Posterior cingulate gyrus (tissue), 11 donors: ENCODE measurements at regions of chr6 and their contacts with region 1.

Region 1: DNA sequence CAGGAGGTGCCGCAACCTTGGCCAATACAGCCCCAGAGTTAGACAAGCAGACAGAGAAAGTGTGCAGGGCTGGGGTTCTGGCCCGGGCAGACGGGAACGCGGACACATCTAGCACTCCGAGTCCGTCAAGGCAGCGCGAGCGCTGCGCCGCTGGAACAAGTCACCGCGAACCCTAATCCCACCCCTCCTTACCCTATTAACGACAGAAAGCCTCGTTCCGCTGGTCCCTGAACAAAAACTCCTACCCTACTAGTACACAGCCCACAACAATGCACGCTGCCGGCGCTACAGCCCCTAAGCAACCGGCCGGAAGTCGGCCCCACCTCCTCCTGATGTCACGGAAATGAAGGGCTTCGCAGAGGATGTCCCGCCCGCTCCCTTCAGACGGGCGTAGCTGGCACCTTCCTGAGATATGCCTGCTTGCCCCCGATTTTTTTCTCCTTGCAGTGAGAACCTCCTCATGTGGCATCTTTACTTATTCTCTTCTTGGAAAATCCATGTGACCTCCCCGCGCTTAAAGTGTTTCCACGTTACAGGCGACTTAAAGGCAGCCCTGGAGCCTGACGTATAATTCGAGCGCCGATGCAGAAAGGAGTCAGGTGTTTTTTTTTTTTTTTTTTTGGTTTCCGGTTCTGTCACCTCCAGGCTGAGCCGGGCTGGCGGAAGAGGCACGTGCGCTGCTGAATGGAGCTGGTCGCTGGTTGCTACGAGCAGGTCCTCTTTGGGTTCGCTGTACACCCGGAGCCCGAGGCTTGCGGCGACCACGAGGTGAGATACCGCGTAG is at the starts of genes C6orf52 and PAK1IP1:
- DNase-seq: peak; percentile 89 to 99 (median 94)

Region 2: DNA sequence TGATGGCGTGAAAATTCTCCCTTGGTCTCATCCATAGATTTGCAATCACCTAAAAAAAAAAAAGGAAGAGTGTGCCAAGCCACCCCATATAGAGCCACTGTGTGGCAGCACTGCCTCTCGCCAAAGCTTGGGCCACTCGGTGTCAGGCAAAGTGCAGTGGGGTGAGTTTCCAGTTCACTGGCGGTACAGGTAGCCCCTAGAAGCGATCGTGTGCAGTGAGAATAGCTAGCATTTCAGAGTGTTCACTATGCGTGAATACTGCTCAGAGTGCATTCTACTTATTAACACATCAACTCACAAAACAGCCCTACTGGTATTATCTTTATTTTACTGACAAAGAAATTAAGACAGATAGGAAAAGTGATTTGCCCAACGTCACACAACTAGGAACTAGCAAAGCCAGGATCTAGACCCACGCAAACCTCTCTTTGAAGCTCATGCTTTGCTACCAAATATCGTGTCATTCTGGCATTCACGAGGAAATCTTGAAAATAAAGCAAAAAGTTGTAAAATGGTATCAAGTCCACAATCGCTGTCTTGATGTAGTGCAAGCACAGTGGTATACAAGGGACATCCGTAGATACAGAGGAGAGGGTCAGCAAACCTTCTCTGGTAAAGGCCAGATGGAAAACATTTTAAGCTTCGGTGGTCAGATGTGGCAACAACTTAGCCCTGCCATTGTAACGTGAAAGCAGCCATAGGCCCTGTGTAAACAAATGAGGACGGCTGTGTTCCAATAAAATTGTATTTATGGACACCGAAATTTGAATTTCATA is 183.7 kb before region 1 on chr6:
- intact Hi-C with region 1: loop called (anchors 2 kb)
- DNase-seq: peak in 8 of 10 donors; percentile 45 to 90 (median 56)

Region 3: DNA sequence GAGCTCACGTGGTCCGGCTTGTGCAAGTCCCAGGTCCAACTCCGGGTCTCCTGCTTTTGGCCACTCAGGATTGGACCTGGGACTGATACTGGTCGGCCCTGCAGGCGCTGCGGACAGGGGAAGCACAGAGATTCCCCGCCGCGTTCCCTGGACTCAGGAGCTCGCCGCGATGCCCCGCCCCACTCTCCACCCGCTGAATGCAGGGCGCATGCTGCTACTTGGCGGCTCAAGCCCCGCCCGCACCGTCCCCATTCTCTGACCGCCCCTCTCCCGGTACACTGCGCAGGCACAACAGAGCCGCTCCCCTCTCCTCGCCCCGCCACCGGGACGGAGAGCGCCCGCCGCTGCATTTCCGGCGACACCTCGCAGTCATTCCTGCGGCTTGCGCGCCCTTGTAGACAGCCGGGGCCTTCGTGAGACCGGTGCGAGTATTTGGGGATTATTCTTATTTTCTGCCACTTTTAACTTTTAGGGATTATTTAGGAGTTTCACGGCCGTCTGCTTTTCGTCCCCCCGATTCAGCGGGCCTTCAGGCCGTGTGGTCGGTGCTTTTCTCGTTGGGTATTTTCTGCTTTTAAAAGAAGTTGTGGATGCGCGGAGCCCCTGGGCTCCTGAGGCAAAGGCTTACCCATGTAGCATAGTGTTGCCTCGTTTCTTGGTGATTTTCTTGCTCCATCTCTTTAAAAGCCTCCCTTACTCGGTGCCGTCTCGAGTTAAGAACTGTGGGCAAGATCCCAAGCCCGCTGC is 28.5 kb after region 1 on chr6 and contains the start of gene TMEM14C:
- intact Hi-C with region 1: loop called (anchors 1 kb)
- DNase-seq: peak; percentile 94 to 100 (median 98)

Region 4: DNA sequence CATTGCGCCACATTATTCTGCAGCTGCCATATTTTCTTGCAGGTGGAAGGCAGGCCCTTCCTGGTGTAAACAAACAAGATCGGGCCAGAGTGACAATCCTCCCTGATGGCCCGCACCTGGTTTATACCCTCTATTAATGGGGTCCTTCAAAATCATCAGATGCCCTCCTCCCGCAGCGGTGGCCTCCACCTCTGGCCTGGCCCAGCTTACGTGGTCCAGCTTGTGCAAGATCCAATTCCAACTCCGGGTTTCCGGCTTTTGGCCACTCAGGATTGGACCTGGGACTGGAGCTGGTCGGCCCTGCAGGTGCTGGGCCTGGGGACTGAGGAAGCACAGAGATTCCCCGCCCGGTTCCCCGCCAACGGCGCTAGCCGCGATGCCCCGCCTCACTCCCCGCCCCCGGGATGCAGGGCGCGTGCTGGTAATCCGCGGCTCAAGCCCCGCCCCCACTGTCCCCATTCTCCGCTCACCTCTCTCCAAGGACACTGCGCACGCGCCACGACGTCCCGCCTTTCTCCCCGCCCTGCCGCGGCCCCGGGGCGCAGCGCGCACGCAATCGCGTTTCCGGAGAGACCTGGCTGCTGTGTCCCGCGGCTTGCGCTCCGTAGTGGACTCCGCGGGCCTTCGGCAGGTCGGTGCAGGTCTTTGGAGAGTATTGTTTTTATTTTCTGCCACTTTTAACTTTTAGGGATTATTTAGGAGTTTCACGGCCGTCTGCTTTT is 52.9 kb after region 1 on chr6 and contains the start of gene TMEM14B:
- intact Hi-C with region 1: loop called (anchors 1 kb)
- DNase-seq: peak; percentile 98 to 100 (median 100)

Region 5: DNA sequence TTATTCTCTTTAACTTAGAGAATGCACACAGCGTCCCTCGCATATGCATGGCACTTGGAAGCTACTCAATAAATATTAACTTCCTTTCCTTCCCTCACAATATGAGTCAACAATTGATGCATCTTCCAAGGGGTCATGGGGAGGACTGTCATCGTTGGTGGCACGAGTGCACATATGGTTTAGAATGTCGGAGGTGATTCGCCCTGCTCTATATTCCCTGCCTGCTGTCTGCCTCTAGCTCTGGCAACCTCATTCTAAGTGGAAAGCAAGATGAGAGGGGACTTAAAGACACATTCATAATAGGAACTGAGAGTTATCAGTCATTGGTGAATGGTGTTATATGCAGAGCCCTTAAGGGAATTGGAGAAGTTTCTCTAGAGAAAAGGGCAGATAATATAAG is 99.2 kb after region 1 on chr6:
- intact Hi-C with region 1: loop called (anchors 10 kb)
- DNase-seq: no peak

Region 6: DNA sequence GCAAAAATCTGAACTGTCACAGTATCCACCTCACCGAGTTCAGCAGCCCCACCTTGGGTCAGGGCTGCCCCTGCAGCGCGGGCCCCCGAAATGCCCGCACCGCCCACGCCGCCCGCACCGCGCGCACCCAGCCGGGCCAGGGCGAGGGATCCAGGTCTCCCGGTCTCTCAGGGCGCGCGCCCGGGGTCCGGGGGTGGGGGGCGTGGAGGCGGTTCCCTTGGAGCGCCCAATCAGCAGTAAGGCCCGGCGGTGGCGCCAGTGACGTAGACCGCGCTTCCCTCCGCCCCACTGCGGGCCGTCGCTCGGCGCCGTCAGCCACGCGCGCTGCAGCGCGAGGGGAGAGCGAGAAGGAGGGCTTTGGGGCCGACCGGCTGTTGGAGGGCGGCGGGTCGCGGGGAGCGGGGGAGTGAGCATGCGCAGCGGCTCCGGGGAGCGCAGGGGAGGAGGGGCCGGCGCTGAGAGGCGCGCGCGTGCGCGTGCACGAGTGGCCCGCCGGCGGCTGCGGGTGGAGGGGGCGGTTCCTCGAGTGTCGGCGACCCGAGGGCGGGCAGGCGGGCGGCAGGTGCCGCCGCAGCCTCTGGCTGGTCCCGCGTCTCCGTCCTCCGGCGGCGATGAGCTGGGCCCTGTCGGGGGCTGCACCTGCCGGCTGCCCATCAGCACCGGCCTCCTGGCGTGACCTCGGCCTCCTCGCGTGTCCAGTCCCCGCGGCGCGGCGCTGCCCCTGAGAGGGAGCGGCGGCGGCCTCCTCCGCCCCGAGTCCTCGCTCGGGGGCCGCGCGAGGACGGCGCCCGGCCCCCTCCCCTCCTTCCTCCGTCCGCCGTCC is 842.9 kb after region 1 on chr6 and contains the start of gene TMEM170B:
- intact Hi-C with region 1: loop called (anchors 5 kb)
- DNase-seq: peak; percentile 91 to 99 (median 96)